ENCODE measurements at regions of chr7 and their contacts with region 1.

Region 1: DNA sequence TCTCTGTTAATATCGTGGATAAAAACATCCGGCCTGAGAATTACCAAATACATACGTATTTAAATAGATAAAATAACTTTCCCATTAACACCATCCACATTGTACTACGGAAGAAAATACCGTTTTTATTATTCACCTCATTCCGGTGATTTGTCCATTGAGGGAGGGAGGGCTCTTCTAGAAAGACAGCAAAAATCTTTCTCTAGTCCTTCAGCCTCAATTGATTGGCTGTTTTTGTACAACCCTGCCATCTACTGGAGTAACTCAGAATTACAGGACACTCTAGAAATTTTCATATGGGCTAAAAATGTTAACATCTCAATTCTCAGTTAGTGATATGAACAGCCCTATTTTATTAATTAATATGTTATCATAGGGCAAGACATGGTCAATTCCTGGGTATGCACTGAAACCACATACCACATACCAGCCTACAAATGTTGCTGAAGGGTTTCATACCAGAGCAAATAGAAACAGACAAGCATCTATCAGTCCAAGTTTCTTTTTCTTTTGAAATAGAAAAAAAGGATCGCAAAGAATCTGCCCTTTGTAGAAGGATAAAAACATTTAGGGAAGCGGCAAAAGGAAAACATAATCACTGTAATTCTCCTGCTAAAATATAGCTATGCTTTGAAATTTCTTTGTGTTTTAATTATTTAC is 55.8 kb upstream of the CDCA7L start:
- DNase-seq: peak in 1 of 2 donors; percentile 28
- ATAC-seq: peak in 4 of 8 donors; percentile 47 to 63 (median 56)
- H3K4me3 ChIP-seq: peak overlapping the region in 2 of 10 donors; percentile 2 to 28
- H3K27ac ChIP-seq: no peak overlapping the region
- H3K4me1 ChIP-seq: peaks cover 0 to 5% (median 0%) of the 10 kb centered on the region in 9 donors
- H3K27me3 ChIP-seq: peaks cover 0 to 19% (median under 1%) of the 10 kb centered on the region in 7 donors
- CTCF ChIP-seq: peak; percentile 62 to 87 (median 82)

Region 2: GRCh38 chr7:21261627-21262594 is 739.6 kb before region 1 on chr7:
- intact Hi-C with region 1: loop called in 7 of 10 experiments (anchors 10 kb)
- DNase-seq: peak in 1 of 2 donors; percentile 6
- ATAC-seq: no peak
- H3K4me3 ChIP-seq: no peak overlapping the region
- H3K27ac ChIP-seq: no peak overlapping the region
- H3K4me1 ChIP-seq: no peaks in the 10 kb centered on the region
- H3K27me3 ChIP-seq: peaks cover 0 to 37% (median 5%) of the 10 kb centered on the region in 7 donors
- CTCF ChIP-seq: peak in 8 of 9 donors; percentile 8 to 49 (median 40)

Region 3: GRCh38 chr7:21767300-21767900 is 234.1 kb before region 1 on chr7:
- intact Hi-C with region 1: loop called in 2 of 10 experiments (anchors 10 kb)
- DNase-seq: peak; percentile 13 to 27
- ATAC-seq: peak in 7 of 8 donors; percentile 34 to 91 (median 83)
- H3K4me3 ChIP-seq: no peak overlapping the region
- H3K27ac ChIP-seq: no peak overlapping the region
- H3K4me1 ChIP-seq: peaks cover 0 to 9% (median 0%) of the 10 kb centered on the region in 9 donors
- H3K27me3 ChIP-seq: peaks cover 0 to 4% (median 0%) of the 10 kb centered on the region in 7 donors
- CTCF ChIP-seq: peak in 8 of 9 donors; percentile 17 to 62 (median 48)

Region 4: DNA sequence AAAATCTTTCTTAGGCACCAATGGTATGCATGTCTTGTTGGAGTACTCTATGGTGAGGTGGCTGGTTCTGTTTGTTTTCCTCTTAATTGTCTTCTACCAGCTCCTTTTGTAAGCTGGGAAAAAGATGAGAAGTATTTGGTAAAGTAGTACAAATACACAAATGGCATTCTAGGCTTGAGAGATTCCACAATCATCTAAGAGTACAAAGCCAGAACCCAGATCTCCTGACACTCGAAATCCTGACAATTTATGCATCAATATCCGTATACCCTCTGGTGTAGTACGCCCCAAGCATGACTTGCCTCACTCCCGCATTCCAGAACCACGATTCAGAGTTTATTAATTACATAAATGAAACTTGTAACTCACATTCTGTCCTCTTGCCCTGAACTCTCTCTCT is 99.2 kb before region 1 on chr7:
- intact Hi-C with region 1: loop called in 1 of 10 experiments (anchors 10 kb)
- DNase-seq: no peak
- ATAC-seq: no peak
- H3K4me3 ChIP-seq: no peak overlapping the region
- H3K27ac ChIP-seq: no peak overlapping the region
- H3K4me1 ChIP-seq: peaks cover 0 to 12% (median 2%) of the 10 kb centered on the region in 9 donors
- H3K27me3 ChIP-seq: no peaks in the 10 kb centered on the region
- CTCF ChIP-seq: no peak

Region 5: DNA sequence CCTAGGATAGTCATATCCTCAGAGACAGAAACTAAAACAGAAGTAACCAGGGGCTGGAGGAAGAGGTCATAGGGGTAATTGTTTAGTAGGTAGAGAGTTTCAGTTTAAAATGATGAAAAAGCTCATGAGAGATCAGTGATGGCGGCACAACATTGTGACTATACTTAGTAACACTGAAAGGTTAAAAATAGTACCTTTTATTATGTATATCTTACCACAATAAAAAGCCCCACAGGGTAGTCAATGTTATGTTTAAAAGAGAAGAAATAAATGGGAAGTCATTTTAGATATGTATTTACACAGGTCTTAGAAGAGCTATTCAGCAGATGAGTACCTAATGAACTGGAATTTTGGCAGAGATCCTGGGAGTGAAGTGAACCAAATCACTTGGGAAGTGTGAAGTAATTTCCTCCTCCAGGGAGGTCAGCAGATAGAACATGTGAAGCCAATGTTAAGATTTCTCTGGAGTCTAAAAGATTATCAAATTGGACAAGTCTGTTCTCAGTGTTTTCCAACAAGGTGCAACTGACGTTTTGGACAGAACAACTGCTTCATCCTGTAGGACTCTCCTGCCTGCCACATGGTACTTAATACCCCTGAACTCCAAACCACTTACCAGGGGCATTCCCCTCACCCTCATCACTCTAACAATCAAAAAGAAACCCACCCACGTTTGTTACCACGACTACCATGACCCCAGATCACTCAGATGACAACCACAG is 62.2 kb before region 1 on chr7:
- intact Hi-C with region 1: no loop called
- DNase-seq: no peak
- ATAC-seq: peak in 5 of 8 donors; percentile 3 to 69 (median 24)
- H3K4me3 ChIP-seq: no peak overlapping the region
- H3K27ac ChIP-seq: peak overlapping the region in 6 of 10 donors; percentile 28 to 83 (median 50)
- H3K4me1 ChIP-seq: peaks cover 0 to 60% (median 25%) of the 10 kb centered on the region in 9 donors
- H3K27me3 ChIP-seq: no peaks in the 10 kb centered on the region
- CTCF ChIP-seq: no peak